HEK293 (cell line): ENCODE measurements at regions of chr1 and their contacts with region 1.

Region 1: DNA sequence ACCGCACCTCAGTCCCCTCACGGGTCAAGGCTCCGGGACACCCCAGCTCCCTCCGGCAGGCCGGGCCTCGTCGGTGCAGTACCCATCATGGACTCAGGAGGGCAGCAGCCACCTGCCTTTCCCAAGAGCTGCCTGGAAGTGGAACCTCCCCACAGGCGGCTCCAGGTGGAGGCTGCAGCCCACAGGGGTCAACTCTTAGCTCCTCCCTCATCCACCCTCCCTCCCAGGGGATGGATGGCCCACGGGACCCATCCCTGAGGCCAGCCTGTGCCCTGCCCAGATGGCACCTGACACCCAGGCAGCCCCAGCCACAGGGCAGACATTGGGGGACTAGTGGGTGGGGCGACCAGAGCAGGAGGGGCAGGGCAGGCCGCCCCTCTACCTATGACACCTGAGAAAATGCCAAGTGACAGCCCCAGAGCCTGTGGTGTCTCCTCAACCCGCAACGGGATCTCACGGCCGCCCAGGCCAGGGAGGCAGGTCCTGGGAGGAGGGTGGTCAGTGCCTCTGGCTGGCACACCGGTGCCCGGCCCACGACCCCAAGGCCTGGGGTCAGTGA is 1.2 kb upstream of the ARHGEF16 start:
- H3K4me3 ChIP-seq: no peak overlapping the region
- H3K27ac ChIP-seq: no peak overlapping the region
- H3K4me1 ChIP-seq: no peaks in the 10 kb centered on the region
- CTCF ChIP-seq: peak; percentile 91

Region 2: DNA sequence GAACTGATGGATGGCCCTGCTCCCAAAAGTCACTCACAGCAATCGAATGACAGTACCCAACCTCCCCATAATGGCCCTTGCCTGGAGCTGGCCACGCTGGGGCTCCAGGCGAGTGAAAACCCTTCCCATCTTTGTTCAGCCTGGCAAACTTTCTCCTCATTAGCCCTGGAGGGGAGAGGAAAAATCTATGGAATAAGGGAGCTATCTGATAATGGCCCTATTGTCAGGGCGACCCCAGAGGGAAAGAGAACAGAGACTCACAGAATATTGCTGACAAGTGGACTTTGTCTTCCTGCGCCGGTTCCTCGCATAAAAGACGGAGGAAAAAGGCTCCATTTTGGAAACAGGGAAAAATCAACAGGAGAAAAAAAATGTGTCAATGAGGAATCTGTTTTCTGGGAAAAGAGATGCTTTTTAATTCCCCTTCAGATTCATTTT is 11.9 kb before region 1 on chr1:
- CTCF ChIA-PET with region 1: interaction called, 19 read pairs
- POLR2A ChIA-PET with region 1: no interaction called
- H3K4me3 ChIP-seq: no peak overlapping the region
- H3K27ac ChIP-seq: no peak overlapping the region
- H3K4me1 ChIP-seq: no peaks in the 10 kb centered on the region
- CTCF ChIP-seq: no peak

Region 3: DNA sequence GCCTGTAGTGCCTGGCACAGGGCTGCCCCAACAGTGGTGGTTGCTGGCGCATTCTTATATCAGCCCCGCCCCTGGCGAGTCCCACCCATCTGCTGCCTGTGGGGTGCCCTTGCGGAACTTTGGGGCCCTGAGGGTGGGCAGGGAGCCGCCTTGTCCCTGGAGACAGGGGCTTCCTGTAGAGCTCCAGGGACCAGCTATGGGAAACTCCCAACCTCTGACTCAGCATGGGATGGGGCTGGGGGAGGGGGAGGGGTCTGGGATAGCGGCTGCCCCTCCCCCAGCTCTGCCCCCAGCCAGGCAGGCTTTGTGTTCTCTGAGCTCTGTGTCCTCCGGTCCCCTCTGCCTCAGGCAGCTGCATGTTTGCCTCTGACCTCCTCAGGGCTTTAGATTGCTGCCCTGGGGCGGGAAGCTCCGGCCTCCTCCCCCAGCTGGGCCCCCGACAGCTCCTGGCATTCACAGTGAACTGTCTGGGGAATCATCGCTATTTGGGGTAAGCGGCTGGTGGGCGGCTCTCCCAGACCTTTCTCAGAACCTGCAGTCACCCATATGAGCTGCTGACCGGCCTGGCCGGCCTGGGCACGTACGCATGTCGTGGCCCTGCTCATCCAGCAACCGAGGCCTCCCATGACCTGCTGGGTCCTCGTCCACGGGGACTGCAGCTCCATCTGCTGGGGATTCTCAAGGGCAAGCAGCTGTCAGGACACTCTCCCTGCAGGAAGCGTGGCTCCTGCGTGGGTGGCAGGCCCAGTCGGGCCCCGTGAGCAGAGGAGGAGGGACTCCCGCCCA is 18.2 kb after region 1 on chr1:
- CTCF ChIA-PET with region 1: interaction called, 25 read pairs
- POLR2A ChIA-PET with region 1: interaction called, 5 read pairs
- H3K4me3 ChIP-seq: no peak overlapping the region
- H3K27ac ChIP-seq: no peak overlapping the region
- H3K4me1 ChIP-seq: no peaks in the 10 kb centered on the region
- CTCF ChIP-seq: 0 out of 2 replicates have a peak, but pooled peaks have one; percentile 28

Region 4: DNA sequence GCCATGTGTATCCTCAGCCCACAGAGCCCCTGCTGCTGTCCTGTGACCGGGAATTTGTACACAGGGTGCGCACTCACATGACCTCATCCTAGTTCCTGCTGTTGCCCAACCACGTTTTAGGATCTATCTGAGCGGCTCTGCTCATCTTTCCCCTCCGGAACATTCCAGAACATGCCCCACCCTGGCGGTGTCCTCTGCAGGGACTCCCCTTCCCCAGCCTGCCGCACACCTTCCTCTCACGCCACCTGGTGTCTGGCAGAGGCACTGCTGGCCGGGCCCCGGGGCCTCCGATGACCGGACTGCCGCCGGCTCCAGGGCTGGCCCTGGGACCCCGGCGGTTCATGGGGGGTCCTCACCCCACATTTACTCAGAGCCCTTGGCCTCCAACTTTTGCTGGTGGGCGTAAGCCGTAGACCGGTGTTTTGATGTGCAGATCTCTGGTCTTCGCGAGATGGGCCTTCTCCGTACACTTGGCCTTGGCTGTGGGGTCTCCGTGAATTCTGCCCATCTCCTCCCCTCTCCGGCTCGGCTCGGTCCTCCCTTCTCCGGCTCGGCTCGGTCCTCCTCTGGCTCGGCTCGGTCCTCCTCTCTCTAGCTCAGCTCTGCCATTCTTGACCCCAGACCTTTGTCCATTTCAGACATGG is 30.6 kb after region 1 on chr1:
- CTCF ChIA-PET with region 1: interaction called, 51 read pairs
- POLR2A ChIA-PET with region 1: interaction called, 5 read pairs
- H3K4me3 ChIP-seq: no peak overlapping the region
- H3K27ac ChIP-seq: no peak overlapping the region
- H3K4me1 ChIP-seq: no peaks in the 10 kb centered on the region
- CTCF ChIP-seq: no peak

Region 5: DNA sequence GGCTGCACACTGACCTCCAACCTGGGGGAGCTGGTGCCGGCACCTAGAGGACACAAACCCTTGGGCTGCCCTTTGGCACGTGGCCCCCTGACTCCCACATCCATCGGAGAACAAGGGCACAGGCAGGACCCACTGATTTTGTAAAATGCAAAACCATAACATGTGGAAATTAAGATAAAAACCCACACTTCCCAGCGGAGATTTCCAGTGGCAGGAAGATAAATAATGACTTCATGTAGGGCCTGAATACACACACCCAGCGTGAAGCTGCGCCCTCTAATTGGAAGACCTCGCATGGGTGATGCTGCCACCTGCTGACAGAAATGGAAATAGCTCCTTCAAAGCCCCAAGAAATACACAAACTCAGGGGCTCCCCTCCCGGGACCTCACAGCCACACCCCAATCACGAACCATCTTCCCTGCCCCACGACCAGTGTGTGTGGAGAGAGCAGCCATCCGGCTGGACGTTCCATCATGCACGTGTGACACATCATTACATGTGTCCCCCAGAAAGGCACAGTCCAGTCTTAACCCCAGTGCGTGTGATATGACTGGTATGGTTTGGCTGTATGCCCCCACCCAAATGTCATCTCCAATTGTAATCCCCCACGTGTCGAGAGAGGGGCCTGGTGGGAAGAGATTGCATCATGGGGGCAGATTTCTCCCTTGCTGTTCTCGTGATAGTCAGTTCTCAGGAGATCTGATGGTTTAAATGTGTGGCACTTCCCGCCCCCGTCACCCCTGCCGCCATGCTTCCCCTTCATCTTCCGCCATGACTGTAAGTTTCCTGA is 165.8 kb after region 1 on chr1:
- CTCF ChIA-PET with region 1: interaction called, 67 read pairs
- POLR2A ChIA-PET with region 1: interaction called, 4 read pairs
- H3K4me3 ChIP-seq: no peak overlapping the region
- H3K27ac ChIP-seq: no peak overlapping the region
- H3K4me1 ChIP-seq: no peaks in the 10 kb centered on the region
- CTCF ChIP-seq: peak; percentile 81